ENCODE measurements at regions of chr7 and their contacts with region 1.

Region 1: GRCh38 chr7:33109758-33110238 is 594 bp upstream of the RP9 start:
- DNase-seq: no peak
- H3K4me3 ChIP-seq: peak overlapping the region; percentile 97
- H3K27ac ChIP-seq: peak overlapping the region; percentile 20
- H3K4me1 ChIP-seq: peaks cover 13% of the 10 kb centered on the region
- H3K27me3 ChIP-seq: no peaks in the 10 kb centered on the region
- CTCF ChIP-seq: no peak

Region 2: GRCh38 chr7:32489788-32490126 is 620.0 kb before region 1 on chr7:
- intact Hi-C with region 1: loop called (anchors 5 kb)
- DNase-seq: no peak
- H3K4me3 ChIP-seq: peak overlapping the region; percentile 68
- H3K27ac ChIP-seq: peak overlapping the region; percentile 91
- H3K4me1 ChIP-seq: no peaks in the 10 kb centered on the region
- H3K27me3 ChIP-seq: no peaks in the 10 kb centered on the region
- CTCF ChIP-seq: no peak

Region 3: DNA sequence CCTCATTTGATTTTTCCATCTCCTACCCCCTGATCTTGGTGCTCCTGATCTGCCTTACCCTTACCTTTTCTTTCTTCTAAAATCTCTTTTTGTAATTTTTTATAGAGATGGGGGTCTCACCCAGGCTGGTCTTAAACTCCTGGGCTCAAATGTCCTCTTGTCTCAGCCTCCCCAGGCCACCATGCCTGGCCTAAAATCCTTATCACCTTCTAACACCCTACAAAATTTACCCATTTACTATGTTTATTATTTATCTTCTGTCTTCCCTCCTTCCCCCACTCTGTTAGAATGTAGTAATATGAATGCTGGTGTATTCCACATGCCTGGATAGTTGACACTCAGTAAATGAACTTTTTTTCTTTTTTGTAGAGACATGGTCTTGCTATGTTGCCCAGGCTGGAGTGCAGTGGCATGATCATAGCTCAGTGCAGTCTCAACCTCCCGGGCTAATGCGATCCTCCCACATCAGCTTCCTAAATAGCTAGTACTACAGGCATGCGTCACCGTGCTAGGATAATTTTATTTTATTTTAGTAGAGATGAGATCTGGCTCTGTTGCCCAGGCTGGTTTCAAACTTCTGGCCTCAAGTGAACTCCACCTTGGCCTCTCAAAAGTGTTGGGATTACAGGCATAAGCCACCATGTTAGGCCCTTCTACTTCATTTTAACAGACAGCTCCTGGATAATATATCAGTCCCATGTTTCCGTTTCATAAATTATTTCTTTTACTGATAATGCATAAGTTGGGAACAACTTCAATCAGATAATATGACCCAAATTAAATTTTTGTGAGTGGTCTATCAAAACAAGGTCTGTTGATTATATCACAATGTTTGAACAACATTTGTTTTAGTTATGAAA is 478.0 kb before region 1 on chr7:
- intact Hi-C with region 1: no loop called
- DNase-seq: no peak
- H3K4me3 ChIP-seq: no peak overlapping the region
- H3K27ac ChIP-seq: no peak overlapping the region
- H3K4me1 ChIP-seq: no peaks in the 10 kb centered on the region
- H3K27me3 ChIP-seq: no peaks in the 10 kb centered on the region
- CTCF ChIP-seq: no peak

Region 4: DNA sequence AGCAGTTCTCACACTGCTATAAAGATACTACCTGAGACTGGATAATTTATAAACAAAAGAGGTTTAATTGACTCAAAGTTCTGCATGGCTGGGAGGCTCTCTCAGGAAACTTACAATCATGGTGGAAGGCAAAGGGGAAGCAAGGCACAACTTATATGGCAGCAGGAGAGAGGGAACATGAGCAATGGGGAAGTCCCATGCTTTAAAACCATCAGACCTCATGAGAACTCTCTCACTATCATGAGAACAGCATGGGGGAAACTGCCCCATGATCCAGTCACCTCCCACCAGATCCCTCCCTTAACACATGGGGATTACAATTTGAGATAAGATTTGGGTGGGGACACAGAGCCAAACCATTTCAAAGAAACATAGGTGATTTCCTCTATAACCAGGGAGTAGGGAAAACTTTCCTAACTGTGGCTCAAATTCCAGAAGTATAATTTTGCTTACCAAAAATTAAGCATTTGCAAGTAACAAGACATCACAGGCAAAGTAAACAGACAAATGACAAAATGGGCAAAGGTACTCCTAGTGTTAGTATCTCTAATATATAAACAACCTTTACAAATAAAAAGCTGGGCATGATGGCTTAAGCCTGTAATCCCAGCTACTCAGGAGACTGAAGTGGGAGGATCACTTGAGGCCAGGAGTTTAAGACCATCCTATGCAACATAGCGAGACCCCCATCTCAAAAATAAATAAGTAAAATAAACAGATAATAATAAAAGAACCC is 306.2 kb before region 1 on chr7:
- intact Hi-C with region 1: loop called (anchors 5 kb)
- DNase-seq: no peak
- H3K4me3 ChIP-seq: no peak overlapping the region
- H3K27ac ChIP-seq: no peak overlapping the region
- H3K4me1 ChIP-seq: no peaks in the 10 kb centered on the region
- H3K27me3 ChIP-seq: no peaks in the 10 kb centered on the region
- CTCF ChIP-seq: no peak